A673 (cell line): ENCODE measurements at regions of chr5 and their contacts with region 1.

Region 1: GRCh38 chr5:76867827-76868693 is 18.2 kb downstream of the S100Z start:
- DNase-seq: peak; percentile 81
- H3K4me3 ChIP-seq: no peak overlapping the region
- H3K27ac ChIP-seq: no peak overlapping the region
- H3K4me1 ChIP-seq: no peaks in the 10 kb centered on the region
- H3K27me3 ChIP-seq: no peaks in the 10 kb centered on the region
- CTCF ChIP-seq: peak; percentile 85

Region 2: DNA sequence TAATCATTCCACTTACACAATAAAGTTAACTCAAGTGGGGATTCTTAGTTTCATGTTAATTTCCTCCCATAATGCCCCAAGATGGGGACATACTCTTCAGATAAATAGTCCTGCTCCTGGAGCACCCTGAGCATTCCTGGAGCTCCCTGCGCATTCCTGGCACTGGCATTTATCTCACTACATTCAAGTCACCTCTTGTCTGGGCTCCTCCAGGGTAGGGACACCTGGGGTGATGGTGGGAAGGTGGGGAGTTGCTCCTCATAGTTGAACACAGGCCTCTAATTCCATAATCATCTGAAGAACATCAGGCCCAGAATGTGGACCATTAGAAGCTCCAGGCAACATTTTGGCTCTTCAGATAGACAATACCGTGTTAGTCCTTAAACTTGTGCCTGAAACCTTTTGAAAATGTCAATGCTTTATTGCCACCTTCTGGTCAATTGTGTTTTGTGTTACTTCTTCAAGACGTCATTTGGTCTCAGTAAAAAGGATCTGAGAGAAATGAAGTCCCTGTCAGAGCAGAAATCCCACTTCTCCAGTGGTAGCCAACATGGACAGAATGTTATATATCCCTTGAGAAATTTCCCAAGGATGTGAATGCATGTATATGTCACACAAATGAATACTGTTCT is 148.0 kb after region 1 on chr5:
- CTCF ChIA-PET with region 1: interaction called, 16 read pairs
- POLR2A ChIA-PET with region 1: no interaction called
- intact Hi-C with region 1: loop called (anchors 1 kb)
- DNase-seq: peak; percentile 71
- H3K4me3 ChIP-seq: no peak overlapping the region
- H3K27ac ChIP-seq: no peak overlapping the region
- H3K4me1 ChIP-seq: no peaks in the 10 kb centered on the region
- H3K27me3 ChIP-seq: peaks cover 5% of the 10 kb centered on the region
- CTCF ChIP-seq: peak; percentile 51

Region 3: GRCh38 chr5:77076961-77077823 is 209.1 kb after region 1 on chr5:
- CTCF ChIA-PET with region 1: no interaction called
- POLR2A ChIA-PET with region 1: no interaction called
- intact Hi-C with region 1: loop called (anchors 1 kb)
- DNase-seq: peak; percentile 78
- H3K4me3 ChIP-seq: peak overlapping the region; percentile 73
- H3K27ac ChIP-seq: peak overlapping the region; percentile 49
- H3K4me1 ChIP-seq: peaks cover 4% of the 10 kb centered on the region
- H3K27me3 ChIP-seq: no peaks in the 10 kb centered on the region
- CTCF ChIP-seq: peak; percentile 62

Region 4: GRCh38 chr5:77239126-77239741 is 371.2 kb after region 1 on chr5:
- CTCF ChIA-PET with region 1: no interaction called
- POLR2A ChIA-PET with region 1: no interaction called
- intact Hi-C with region 1: loop called (anchors 5 kb)
- DNase-seq: peak; percentile 26
- H3K4me3 ChIP-seq: no peak overlapping the region
- H3K27ac ChIP-seq: no peak overlapping the region
- H3K4me1 ChIP-seq: no peaks in the 10 kb centered on the region
- H3K27me3 ChIP-seq: no peaks in the 10 kb centered on the region
- CTCF ChIP-seq: peak; percentile 42